Activated naive CD4-positive, alpha-beta T cell treated with anti-CD3 and anti-CD28 coated beads for 36 hours (primary cell): ENCODE measurements at regions of chr11 and their contacts with region 1.

Region 1: GRCh38 chr11:47552566-47553416 is at the start of gene CELF1:
- DNase-seq: peak; percentile 95
- H3K4me3 Mint-ChIP-seq: peak within 1 kb of the TSS; percentile 97
- H3K27ac Mint-ChIP-seq: peak within 1 kb of the TSS; percentile 95
- H3K4me1 Mint-ChIP-seq: peaks cover 42% of the 10 kb centered on the region
- H3K27me3 Mint-ChIP-seq: no peaks in the 10 kb centered on the region
- total RNA-seq, gene CELF1: 104 to 105 TPM

Region 2: DNA sequence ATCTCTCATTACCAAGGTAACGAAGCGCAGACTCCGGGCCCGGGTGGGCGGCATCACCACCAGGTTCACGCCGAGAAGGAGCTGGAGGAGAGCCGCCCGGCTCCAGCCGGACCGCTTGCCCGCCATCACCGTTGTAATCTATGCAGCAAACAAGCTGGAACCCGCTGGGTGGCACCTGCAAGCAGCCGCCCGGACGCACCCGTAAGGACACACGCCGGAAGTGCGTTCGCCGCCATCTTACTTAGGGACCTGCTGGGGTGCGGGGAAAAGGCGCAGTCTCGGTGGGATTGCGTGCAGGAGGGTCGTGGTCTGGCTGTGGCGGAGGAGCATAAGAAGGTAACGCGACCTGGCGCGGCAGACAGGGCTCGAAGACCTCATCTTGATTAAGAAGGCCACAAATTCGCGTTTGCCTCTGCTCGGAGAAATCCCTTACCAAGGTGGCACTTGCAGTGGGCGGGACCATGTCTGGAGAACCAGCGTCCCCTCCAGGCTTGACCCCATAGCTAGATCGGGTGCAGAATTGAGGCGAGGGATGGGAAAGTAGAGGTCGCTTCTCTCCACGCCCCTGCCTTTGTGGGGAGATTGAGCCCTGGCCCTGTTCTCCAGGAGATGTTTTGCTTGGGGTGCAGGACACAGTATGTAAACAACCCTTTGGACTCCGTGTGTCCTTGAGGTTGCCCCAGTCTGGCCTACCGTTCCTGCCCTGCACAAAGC is 304.0 kb before region 1 on chr11 and contains the start of gene ACP2:
- CTCF ChIA-PET with region 1: interaction called, 3 read pairs
- intact Hi-C with region 1: loop called (anchors 1 kb)
- DNase-seq: peak; percentile 94
- H3K4me3 Mint-ChIP-seq: peak within 1 kb of the TSS; percentile 99
- H3K27ac Mint-ChIP-seq: peak within 1 kb of the TSS; percentile 97
- H3K4me1 Mint-ChIP-seq: peaks cover 24% of the 10 kb centered on the region
- H3K27me3 Mint-ChIP-seq: no peaks in the 10 kb centered on the region
- total RNA-seq, gene ACP2: 8.0 to 9.3 TPM

Region 3: GRCh38 chr11:47477323-47477722 is 75.5 kb before region 1 on chr11:
- CTCF ChIA-PET with region 1: interaction called, 3 read pairs
- intact Hi-C with region 1: loop called (anchors 1 kb)
- DNase-seq: peak; percentile 30
- H3K4me3 Mint-ChIP-seq: no peak overlapping the region
- H3K27ac Mint-ChIP-seq: peak overlapping the region; percentile 46
- H3K4me1 Mint-ChIP-seq: peaks cover 12% of the 10 kb centered on the region
- H3K27me3 Mint-ChIP-seq: no peaks in the 10 kb centered on the region

Region 4: GRCh38 chr11:47523468-47524225 is 29.1 kb before region 1 on chr11:
- CTCF ChIA-PET with region 1: interaction called, 14 read pairs
- intact Hi-C with region 1: loop called (anchors 1 kb)
- DNase-seq: peak; percentile 82
- H3K4me3 Mint-ChIP-seq: peak overlapping the region; percentile 57
- H3K27ac Mint-ChIP-seq: peak overlapping the region; percentile 90
- H3K4me1 Mint-ChIP-seq: peaks cover 79% of the 10 kb centered on the region
- H3K27me3 Mint-ChIP-seq: no peaks in the 10 kb centered on the region

Region 5: GRCh38 chr11:47565340-47566148 is 12.8 kb after region 1 on chr11 and contains the start of gene PTPMT1:
- CTCF ChIA-PET with region 1: interaction called, 8 read pairs
- intact Hi-C with region 1: loop called (anchors 1 kb)
- DNase-seq: peak; percentile 82
- H3K4me3 Mint-ChIP-seq: peak within 1 kb of the TSS; percentile 83
- H3K27ac Mint-ChIP-seq: peak within 1 kb of the TSS; percentile 75
- H3K4me1 Mint-ChIP-seq: peaks cover 26% of the 10 kb centered on the region
- H3K27me3 Mint-ChIP-seq: no peaks in the 10 kb centered on the region
- total RNA-seq, gene PTPMT1: 46.9 to 49.2 TPM

Region 6: GRCh38 chr11:47642099-47642855 is 89.5 kb after region 1 on chr11 and contains the start of gene MTCH2:
- CTCF ChIA-PET with region 1: no interaction called
- intact Hi-C with region 1: loop called (anchors 1 kb)
- DNase-seq: peak; percentile 97
- H3K4me3 Mint-ChIP-seq: peak within 1 kb of the TSS; percentile 91
- H3K27ac Mint-ChIP-seq: peak within 1 kb of the TSS; percentile 81
- H3K4me1 Mint-ChIP-seq: peaks cover 19% of the 10 kb centered on the region
- H3K27me3 Mint-ChIP-seq: no peaks in the 10 kb centered on the region
- total RNA-seq, gene MTCH2: 93.7 to 95.1 TPM